Cardiac septum (tissue), 1 donor: ENCODE measurements at regions of chr1 and their contacts with region 1.

Region 1: DNA sequence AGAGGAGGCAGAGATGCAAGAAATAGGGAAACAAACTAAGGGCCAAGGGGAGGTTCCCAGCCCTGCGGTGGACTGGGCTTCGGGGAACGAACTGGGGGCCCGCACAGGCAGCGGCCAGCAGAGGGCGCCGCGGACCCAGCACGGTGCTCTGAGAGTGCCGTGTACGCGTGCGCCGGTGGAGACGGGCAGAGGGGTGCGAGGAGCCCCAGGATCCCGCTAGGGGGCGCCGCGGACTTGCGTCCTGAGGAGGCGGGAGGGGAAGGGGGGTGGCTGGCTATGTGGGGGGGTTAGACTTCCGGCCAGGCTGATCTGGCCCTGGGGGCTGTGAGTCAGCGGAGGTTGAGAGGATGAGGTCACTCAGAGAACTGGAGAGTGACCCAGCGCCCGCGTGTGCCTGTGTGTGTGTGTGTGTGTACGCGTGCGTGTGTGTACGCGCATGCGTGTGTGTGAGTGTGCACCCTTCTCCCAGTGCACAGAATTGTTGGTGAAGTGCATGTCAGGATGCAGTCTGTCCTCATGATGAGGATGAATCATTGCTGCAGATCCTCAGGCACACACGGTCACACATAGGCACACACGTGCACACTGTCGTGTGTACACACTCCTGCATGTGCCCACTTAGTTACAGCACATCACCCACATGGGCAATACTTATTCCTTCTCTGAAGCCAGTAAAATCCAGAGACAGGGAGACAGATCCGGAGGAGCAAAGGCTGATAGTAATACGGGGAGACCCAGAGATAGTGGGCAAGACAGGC is 17.0 kb downstream of the NES start:
- DNase-seq: peak; percentile 97

Region 2: DNA sequence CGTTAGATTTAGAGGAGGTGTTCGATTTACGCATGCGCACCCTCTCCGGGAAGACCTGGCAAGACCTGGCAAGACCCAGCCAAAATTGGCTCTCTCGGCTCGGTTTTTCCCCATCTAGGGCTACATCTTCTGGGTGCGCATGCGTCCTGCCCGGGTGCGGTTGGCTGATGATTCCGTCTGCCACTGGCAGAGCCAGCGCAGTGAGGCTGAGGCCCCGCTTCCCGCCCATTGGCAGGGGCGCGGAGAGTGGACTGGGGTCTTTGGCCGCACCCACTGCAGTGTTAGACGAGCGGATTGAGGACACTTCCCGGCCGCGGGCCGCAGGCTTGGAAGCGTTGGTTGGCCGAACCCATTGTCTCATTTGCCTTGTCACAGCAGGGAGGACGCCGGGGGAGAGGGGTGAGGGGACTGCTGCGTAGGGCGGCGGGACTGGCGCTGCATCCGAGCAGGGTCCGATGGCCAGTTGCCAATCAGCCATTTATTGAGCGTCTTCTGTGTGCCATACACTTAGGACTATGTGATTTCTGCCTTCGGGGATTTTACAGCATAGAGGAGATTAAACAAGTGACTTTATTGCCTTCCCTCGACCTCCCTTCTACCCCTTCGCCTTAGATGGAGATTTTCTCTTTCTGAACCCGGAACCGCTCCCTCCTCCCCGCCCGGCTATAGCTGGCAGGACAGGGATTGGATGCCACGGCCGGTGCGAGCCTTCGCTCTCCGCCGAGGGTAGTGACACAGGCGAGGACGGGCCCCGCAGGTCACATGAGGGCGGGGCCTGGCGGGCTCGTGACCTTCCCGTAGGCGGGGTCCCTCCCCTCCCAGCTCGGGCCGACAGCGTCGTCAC is 203.3 kb before region 1 on chr1:
- intact Hi-C with region 1: loop called (anchors 2 kb)
- DNase-seq: peak; percentile 98

Region 3: DNA sequence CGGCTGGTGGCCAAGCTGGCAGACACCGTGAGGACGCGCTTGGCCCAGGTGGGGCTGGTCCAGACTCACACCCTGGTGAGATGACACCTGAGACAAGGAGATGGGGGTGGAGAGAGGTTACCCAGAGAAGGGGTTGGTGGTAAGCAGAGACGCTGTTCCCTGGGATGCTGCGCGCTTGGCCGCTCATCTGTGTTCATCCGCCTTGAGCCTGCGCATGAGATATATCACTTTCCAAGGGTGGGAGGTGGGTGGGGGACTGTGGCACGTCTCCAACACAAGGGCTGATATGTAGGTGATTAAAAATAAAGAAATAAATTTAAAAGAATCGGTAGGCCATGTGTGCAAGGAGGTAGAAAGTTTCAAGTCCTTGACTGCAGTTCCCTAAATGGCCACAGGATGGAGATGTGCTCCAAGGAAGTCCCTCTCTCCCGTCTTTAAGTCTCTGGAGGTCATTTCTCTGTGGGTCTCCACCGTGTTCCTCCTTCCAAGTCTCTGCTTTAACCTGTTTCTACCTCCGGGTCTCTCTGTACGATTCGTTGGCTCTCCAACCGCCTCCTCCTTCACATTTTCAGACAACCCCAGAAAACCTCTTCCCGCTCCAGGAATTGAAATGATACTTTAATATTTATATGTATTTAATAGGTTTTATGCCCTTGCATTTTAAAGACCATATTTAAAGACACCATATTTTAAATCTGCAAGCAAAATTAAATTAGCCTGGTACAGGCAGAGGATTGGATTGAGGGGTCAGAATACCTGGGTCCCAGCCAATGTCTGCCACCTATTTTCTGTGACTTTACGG is 76.2 kb before region 1 on chr1:
- intact Hi-C with region 1: loop called (anchors 5 kb)
- DNase-seq: no peak

Region 4: DNA sequence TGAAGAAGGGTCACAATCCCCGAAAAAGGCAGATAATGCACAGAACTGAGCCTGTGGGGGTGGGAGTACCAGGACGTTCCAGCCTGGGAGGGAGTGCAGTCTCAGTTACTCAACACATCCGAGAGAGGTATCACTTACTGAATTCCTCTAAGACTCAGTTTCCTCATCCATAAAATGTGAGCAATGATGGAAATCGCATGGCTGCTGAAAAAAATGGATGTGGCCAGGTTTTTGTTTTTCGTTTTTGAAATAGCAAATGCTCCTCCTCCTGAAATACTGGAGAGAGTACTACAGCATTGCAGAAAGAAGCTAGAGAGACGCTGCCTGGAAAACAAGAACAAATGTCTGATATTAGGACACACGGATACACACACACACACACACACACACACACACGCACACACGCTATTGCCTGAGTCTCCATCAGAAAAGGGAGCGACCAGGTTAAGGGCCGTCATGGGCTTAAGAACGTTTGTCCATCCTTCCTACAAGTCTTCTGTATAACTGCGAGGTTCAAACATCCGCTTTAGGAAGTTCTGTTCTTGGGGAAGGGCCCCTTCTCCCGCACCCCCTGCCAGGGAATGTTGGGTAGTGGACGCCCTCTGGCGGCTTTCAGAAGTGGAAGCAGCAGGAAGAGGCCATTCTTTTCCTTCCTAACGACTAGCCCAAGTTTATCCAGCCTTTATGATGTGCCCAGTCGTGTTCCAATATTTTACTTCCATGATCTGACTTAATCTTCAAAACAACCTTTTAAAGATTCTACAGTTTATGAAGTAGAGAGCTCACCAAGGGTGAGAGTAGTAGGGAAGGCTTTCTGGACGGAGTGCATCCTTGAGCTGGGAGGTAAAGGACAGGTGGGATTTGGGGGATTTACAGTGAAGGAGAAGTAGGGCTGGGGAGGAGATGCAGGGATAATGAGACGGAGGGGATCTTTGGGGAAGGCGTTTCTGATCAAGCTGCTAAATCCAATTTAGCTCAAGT is 17.7 kb after region 1 on chr1:
- intact Hi-C with region 1: loop called (anchors 1 kb)
- DNase-seq: no peak